ENCODE measurements at regions of chr15 and their contacts with region 1.

Region 1: DNA sequence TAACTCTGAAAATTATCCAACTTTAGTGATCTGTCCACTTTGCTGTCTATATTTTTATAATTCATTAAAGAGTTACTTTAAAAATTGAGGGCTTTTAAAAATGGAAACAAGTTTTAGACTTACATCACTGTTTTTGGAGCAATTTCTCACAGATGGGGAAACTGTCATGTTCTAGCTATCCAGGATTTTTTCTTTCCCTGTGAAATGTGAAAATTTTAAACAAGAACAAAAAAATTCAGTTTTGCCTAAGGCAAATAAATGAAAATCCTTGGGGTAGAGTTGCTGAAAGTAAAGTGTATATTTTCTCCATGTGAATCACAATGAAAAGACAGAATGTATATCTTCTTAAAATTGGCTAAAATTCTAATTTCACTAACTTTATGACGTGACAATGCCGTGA is 553.7 kb downstream of the MCTP2 start:
- DNase-seq: no peak
- ATAC-seq: no peak
- H3K4me3 ChIP-seq: no peak overlapping the region
- H3K4me3 Mint-ChIP-seq: no peak overlapping the region
- H3K27ac ChIP-seq: no peak overlapping the region
- H3K27ac Mint-ChIP-seq: no peak overlapping the region
- H3K4me1 ChIP-seq: no peaks in the 10 kb centered on the region
- H3K4me1 Mint-ChIP-seq: no peaks in the 10 kb centered on the region
- H3K27me3 ChIP-seq: no peaks in the 10 kb centered on the region
- H3K27me3 Mint-ChIP-seq: peaks cover 3% of the 10 kb centered on the region
- CTCF ChIP-seq: no peak

Region 2: GRCh38 chr15:94056314-94056713 is 728.8 kb before region 1 on chr15:
- CTCF ChIA-PET with region 1: no interaction called
- POLR2A ChIA-PET with region 1: no interaction called
- intact Hi-C with region 1: loop called in 1 of 2 experiments (anchors 5 kb)
- DNase-seq: no peak
- ATAC-seq: no peak
- H3K4me3 ChIP-seq: no peak overlapping the region
- H3K4me3 Mint-ChIP-seq: no peak overlapping the region
- H3K27ac ChIP-seq: no peak overlapping the region
- H3K27ac Mint-ChIP-seq: no peak overlapping the region
- H3K4me1 ChIP-seq: no peaks in the 10 kb centered on the region
- H3K4me1 Mint-ChIP-seq: no peaks in the 10 kb centered on the region
- H3K27me3 ChIP-seq: peaks cover 0 to 5% of the 10 kb centered on the region in 2 experiments
- H3K27me3 Mint-ChIP-seq: peaks cover 5% of the 10 kb centered on the region
- CTCF ChIP-seq: no peak

Region 3: GRCh38 chr15:95141486-95141885 is 356.4 kb after region 1 on chr15:
- CTCF ChIA-PET with region 1: no interaction called
- POLR2A ChIA-PET with region 1: no interaction called
- intact Hi-C with region 1: no loop called
- DNase-seq: no peak
- ATAC-seq: no peak
- H3K4me3 ChIP-seq: no peak overlapping the region
- H3K4me3 Mint-ChIP-seq: no peak overlapping the region
- H3K27ac ChIP-seq: no peak overlapping the region
- H3K27ac Mint-ChIP-seq: no peak overlapping the region
- H3K4me1 ChIP-seq: no peaks in the 10 kb centered on the region
- H3K4me1 Mint-ChIP-seq: no peaks in the 10 kb centered on the region
- H3K27me3 ChIP-seq: no peaks in the 10 kb centered on the region
- H3K27me3 Mint-ChIP-seq: peaks cover 5% of the 10 kb centered on the region
- CTCF ChIP-seq: no peak

Measured in CD8-positive, alpha-beta T cell (primary cell).